ENCODE measurements at regions of chr5 and their contacts with region 1.

Region 1: GRCh38 chr5:10283927-10284635 is 23.6 kb downstream of the CMBL start:
- DNase-seq: peak; percentile 73
- ATAC-seq: peak; percentile 99
- H3K4me3 Mint-ChIP-seq: no peak overlapping the region
- H3K27ac Mint-ChIP-seq: no peak overlapping the region
- H3K4me1 Mint-ChIP-seq: peaks cover 13% of the 10 kb centered on the region
- H3K27me3 Mint-ChIP-seq: peaks cover 2% of the 10 kb centered on the region
- CTCF ChIP-seq: peak; percentile 92

Region 2: GRCh38 chr5:9766581-9766980 is 517.5 kb before region 1 on chr5:
- CTCF ChIA-PET with region 1: no interaction called
- POLR2A ChIA-PET with region 1: no interaction called
- intact Hi-C with region 1: no loop called
- DNase-seq: no peak
- ATAC-seq: no peak
- H3K4me3 Mint-ChIP-seq: no peak overlapping the region
- H3K27ac Mint-ChIP-seq: no peak overlapping the region
- H3K4me1 Mint-ChIP-seq: no peaks in the 10 kb centered on the region
- H3K27me3 Mint-ChIP-seq: no peaks in the 10 kb centered on the region
- CTCF ChIP-seq: no peak

Region 3: DNA sequence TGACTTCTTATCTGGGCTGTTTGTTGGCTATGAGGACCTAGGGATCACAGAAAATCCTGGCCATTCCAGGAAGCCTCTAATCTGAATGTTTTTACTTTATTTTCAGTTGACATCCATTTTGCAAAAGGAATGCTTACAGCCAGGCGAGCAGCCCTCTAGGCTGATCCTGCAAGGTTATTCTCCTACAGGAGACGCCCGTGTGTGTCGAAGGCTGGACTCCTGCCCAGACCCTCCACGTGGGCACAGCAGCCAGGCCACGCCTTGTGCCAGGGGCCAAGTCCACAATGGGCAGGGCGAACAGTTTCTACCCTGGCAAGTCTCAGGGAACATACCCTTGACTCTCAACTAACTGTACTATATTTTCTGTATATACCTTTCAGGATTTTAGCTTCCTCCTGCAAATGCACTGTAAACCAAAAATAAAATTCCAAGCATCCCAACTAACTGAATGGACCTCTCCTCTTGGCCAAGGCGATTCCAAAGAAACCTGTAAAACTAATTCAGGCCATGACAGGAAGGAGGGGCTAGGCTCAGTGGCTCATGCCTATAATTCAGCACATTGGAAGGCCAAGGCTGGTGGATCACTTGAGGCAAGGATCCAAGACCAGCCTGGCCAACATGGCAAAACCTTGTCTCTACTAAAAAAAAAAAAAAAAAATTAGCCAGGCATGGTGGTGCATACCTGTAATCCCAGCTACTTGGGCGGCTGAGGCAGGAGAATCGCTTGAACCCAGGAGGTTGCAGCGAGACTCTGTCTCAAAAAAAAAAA is 17.9 kb after region 1 on chr5:
- CTCF ChIA-PET with region 1: no interaction called
- POLR2A ChIA-PET with region 1: no interaction called
- intact Hi-C with region 1: no loop called
- DNase-seq: no peak
- ATAC-seq: no peak
- H3K4me3 Mint-ChIP-seq: no peak overlapping the region
- H3K27ac Mint-ChIP-seq: no peak overlapping the region
- H3K4me1 Mint-ChIP-seq: peaks cover 5% of the 10 kb centered on the region
- H3K27me3 Mint-ChIP-seq: peaks cover 22% of the 10 kb centered on the region
- CTCF ChIP-seq: no peak

Region 4: GRCh38 chr5:10364186-10364683 is 80.2 kb after region 1 on chr5:
- CTCF ChIA-PET with region 1: interaction called, 8 read pairs
- POLR2A ChIA-PET with region 1: interaction called, 3 read pairs
- intact Hi-C with region 1: loop called (anchors 1 kb)
- DNase-seq: no peak
- ATAC-seq: peak; percentile 25
- H3K4me3 Mint-ChIP-seq: no peak overlapping the region
- H3K27ac Mint-ChIP-seq: no peak overlapping the region
- H3K4me1 Mint-ChIP-seq: peaks cover 79% of the 10 kb centered on the region
- H3K27me3 Mint-ChIP-seq: no peaks in the 10 kb centered on the region
- CTCF ChIP-seq: no peak

Region 5: GRCh38 chr5:10387690-10388089 is 103.6 kb after region 1 on chr5:
- CTCF ChIA-PET with region 1: interaction called, 10 read pairs
- POLR2A ChIA-PET with region 1: no interaction called
- intact Hi-C with region 1: no loop called
- DNase-seq: no peak
- ATAC-seq: no peak
- H3K4me3 Mint-ChIP-seq: no peak overlapping the region
- H3K27ac Mint-ChIP-seq: no peak overlapping the region
- H3K4me1 Mint-ChIP-seq: no peaks in the 10 kb centered on the region
- H3K27me3 Mint-ChIP-seq: no peaks in the 10 kb centered on the region
- CTCF ChIP-seq: no peak

Region 6: DNA sequence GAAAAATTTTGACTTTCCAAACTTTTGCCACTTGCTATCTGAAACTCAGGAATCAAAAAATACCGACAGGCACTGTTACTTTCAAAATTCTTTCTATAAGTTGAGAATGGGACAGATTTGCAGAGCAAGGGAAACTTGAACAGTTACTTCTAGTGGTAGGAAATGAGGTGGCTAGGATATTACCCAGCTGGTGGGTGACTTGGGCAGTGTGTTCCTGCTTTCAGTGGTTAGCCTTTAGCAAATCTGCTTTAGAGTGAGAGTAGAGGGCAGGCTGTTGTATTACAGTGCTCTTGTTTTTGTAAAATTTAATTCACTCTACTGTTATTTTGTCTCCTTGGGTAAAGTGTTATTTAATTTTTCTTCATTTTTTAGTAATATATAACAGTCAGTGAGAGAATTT is 117.4 kb after region 1 on chr5:
- CTCF ChIA-PET with region 1: interaction called, 6 read pairs
- POLR2A ChIA-PET with region 1: no interaction called
- intact Hi-C with region 1: loop called (anchors 1 kb)
- DNase-seq: no peak
- ATAC-seq: no peak
- H3K4me3 Mint-ChIP-seq: no peak overlapping the region
- H3K27ac Mint-ChIP-seq: no peak overlapping the region
- H3K4me1 Mint-ChIP-seq: no peaks in the 10 kb centered on the region
- H3K27me3 Mint-ChIP-seq: no peaks in the 10 kb centered on the region
- CTCF ChIP-seq: no peak

Region 7: DNA sequence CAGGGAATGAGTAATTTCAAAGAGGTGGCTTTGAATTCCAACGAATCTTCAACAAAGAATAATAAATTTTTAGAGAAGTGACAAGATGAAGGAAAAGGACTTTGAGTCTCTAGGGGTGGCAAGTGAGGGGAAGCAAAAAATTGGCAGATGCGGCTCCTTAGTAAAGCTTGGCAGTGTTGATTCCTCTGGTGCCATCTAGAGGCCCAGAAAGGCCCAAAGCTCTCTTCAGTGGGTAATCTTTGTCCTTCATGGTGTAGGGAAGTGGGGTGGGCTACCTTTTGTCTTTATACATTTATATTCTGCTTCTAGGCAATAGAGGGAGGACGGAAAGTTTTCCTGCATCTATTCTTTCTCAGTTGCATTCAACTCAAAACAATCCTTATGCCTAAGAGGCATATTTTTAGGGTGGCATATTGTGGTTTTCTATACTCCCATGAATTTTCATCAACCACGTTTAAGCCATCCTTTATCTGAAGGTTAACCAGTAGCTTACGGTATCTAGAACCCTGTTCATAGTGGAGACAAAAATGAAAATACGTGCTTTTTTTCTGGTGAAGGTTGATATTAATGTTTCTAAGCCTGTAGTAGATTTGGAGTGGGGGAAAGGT is 140.1 kb after region 1 on chr5:
- CTCF ChIA-PET with region 1: interaction called, 40 read pairs
- POLR2A ChIA-PET with region 1: no interaction called
- intact Hi-C with region 1: loop called (anchors 1 kb)
- DNase-seq: no peak
- ATAC-seq: peak; percentile 61
- H3K4me3 Mint-ChIP-seq: no peak overlapping the region
- H3K27ac Mint-ChIP-seq: no peak overlapping the region
- H3K4me1 Mint-ChIP-seq: peaks cover 28% of the 10 kb centered on the region
- H3K27me3 Mint-ChIP-seq: no peaks in the 10 kb centered on the region
- CTCF ChIP-seq: no peak

Measured in activated B cell treated with CpG ODN at 0.5 μM for 24 hours (primary cell).